ENCODE measurements at regions of chr1 and their contacts with region 1.

Region 1: GRCh38 chr1:15429701-15430149 is 8.5 kb upstream of the CTRC start:
- DNase-seq: no peak
- H3K4me3 ChIP-seq: no peak overlapping the region
- H3K27ac ChIP-seq: no peak overlapping the region
- H3K4me1 ChIP-seq: peaks cover 0 to 2% of the 10 kb centered on the region in 2 donors
- H3K27me3 ChIP-seq: no peaks in the 10 kb centered on the region
- CTCF ChIP-seq: no peak
- POLR2A ChIP-seq: no peak

Region 2: DNA sequence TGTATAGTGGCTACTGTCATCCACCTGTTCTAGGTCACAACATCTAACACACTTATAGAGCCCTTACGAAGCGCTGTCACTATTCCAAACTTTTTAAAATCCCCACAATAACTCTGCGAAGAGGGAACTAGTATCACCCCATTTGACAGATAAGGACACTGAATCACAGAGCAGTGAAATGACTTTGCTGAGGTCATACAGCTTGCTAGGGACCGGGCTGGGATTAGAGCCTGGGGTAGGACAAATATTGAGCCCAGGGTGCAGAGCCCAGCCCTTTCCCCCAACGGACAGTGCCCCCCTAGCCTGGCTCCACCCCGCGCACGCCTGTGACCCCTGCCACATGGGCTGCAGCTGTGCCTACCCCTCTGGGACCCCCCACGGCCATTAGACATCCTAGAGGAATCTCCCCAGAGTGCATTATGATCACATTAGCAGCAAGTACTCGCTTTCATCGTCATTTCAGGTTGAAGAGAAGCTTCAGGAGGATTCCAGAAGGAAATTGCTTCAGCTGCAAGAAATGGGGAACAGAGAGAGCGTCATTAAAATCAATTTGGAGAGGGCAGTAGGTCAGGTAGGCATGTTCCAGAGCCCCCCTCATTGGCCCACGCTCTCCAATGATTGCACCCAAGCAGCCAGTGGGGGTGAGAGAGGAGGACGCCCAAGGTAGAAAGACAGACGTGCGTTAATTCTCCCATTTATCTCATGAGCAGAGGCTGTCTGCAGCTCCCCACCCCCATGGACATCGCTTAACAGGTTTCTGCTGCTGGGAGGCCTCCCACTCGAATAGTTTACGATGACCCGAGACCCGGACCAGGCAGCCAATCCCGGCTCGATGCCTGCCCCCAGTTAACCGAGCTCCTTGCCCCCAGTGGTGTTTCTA is 105.5 kb before region 1 on chr1:
- intact Hi-C with region 1: loop called (anchors 2 kb)
- DNase-seq: no peak
- H3K4me3 ChIP-seq: no peak overlapping the region
- H3K27ac ChIP-seq: no peak overlapping the region
- H3K4me1 ChIP-seq: peaks cover 13 to 26% of the 10 kb centered on the region in 2 donors
- H3K27me3 ChIP-seq: no peaks in the 10 kb centered on the region
- CTCF ChIP-seq: no peak
- POLR2A ChIP-seq: no peak

Region 3: GRCh38 chr1:15662477-15662876 is 232.8 kb after region 1 on chr1:
- intact Hi-C with region 1: no loop called
- DNase-seq: no peak
- H3K4me3 ChIP-seq: no peak overlapping the region
- H3K27ac ChIP-seq: no peak overlapping the region
- H3K4me1 ChIP-seq: no peaks in the 10 kb centered on the region
- H3K27me3 ChIP-seq: no peaks in the 10 kb centered on the region
- CTCF ChIP-seq: no peak
- POLR2A ChIP-seq: no peak